ENCODE measurements at regions of chr11 and their contacts with region 1.

Region 1: GRCh38 chr11:118757876-118758399 is 33.0 kb downstream of the DDX6 start:
- DNase-seq: no peak
- ATAC-seq: no peak
- H3K4me3 Mint-ChIP-seq: no peak overlapping the region
- H3K27ac Mint-ChIP-seq: no peak overlapping the region
- H3K4me1 Mint-ChIP-seq: no peaks in the 10 kb centered on the region
- H3K27me3 Mint-ChIP-seq: no peaks in the 10 kb centered on the region
- CTCF ChIP-seq: no peak

Region 2: GRCh38 chr11:118939953-118940598 is 182.1 kb after region 1 on chr11:
- CTCF ChIA-PET with region 1: no interaction called
- POLR2A ChIA-PET with region 1: interaction called, 12 read pairs
- intact Hi-C with region 1: no loop called
- DNase-seq: no peak
- ATAC-seq: peak; percentile 58
- H3K4me3 Mint-ChIP-seq: no peak overlapping the region
- H3K27ac Mint-ChIP-seq: no peak overlapping the region
- H3K4me1 Mint-ChIP-seq: peaks cover 22% of the 10 kb centered on the region
- H3K27me3 Mint-ChIP-seq: peaks cover 3% of the 10 kb centered on the region
- CTCF ChIP-seq: no peak

Region 3: DNA sequence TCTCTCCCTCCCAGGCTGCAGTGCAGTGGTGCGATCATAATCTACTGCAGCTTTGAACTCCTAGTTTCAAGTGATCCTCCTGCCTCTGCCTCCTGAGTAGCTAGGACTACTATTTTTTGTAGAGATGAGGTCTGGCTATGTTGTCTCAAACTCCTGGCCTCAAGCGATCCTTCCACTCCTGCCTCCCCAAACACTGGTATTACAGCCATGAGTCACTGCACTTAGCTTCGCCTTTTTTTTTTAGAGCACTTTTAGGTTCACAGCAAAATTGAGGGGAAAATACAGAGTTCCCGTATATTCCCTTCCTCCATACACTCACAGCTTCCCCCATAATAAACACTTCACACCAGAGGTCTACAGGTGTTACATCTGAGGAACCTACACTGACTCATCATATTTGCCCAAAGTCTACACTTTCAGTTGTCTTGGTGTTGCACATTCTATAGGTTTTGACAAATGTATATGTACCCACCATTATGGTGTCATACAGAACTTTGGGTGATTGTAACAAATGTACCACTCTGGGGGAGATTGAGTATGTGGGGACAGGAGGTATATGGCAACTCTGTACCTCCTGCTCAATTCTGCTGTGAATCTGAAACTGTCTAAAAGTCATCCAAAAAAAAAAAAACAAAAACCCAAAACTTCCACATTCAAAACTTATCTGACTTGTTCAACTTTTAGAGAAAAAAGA is 284.0 kb after region 1 on chr11:
- CTCF ChIA-PET with region 1: no interaction called
- POLR2A ChIA-PET with region 1: no interaction called
- intact Hi-C with region 1: no loop called
- DNase-seq: no peak
- ATAC-seq: no peak
- H3K4me3 Mint-ChIP-seq: no peak overlapping the region
- H3K27ac Mint-ChIP-seq: no peak overlapping the region
- H3K4me1 Mint-ChIP-seq: peaks cover 11% of the 10 kb centered on the region
- H3K27me3 Mint-ChIP-seq: no peaks in the 10 kb centered on the region
- CTCF ChIP-seq: no peak